ENCODE measurements at regions of chr3 and their contacts with region 1.

Region 1: DNA sequence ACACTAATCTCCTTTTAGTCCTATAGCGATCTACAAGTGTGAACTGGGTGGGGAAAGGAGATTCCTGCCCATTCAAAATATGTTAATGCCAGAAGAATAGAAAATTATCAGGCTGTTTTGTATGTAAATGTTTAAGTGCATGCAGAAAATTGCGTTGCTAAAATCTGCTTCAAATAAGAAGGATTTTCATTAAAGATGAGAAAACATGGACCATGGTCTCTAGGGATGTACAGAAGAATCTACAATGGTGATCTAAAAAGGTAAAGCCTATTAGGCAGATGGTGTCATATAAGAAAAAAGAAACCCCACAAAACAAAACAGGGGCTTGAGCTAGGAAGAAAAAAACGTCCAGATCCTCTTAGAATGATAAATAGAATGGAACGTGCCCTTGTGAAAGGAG is 287.5 kb upstream of the ROBO1 start:
- DNase-seq: no peak
- H3K4me3 ChIP-seq: no peak overlapping the region
- H3K27ac ChIP-seq: no peak overlapping the region
- H3K4me1 ChIP-seq: no peaks in the 10 kb centered on the region
- H3K27me3 ChIP-seq: no peaks in the 10 kb centered on the region
- CTCF ChIP-seq: no peak

Region 2: GRCh38 chr3:79184251-79184650 is 871.1 kb before region 1 on chr3:
- CTCF ChIA-PET with region 1: no interaction called
- dilution Hi-C with region 1: no loop called
- in situ Hi-C with region 1: no loop called
- intact Hi-C with region 1: no loop called
- DNase-seq: no peak
- H3K4me3 ChIP-seq: no peak overlapping the region
- H3K27ac ChIP-seq: no peak overlapping the region
- H3K4me1 ChIP-seq: no peaks in the 10 kb centered on the region
- H3K27me3 ChIP-seq: peaks cover 2% of the 10 kb centered on the region
- CTCF ChIP-seq: no peak

Region 3: DNA sequence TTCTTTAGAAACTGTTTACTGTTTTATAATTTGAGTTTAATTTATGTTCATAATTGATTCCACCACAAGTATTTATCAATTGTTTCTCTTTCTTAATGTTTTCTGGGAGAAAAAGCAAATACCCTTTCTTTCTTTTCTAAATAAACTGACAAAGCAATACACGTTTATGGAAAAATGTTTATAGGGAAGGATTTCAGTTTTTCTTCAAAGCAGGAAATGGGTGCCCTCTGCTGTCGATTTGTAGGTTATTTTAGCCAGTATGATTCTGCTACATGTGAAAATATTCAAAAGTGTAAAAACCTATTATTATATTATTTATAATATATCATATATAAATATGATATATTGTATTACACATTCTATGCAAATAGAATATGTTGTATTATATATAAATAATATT is 633.5 kb after region 1 on chr3:
- CTCF ChIA-PET with region 1: no interaction called
- dilution Hi-C with region 1: no loop called
- in situ Hi-C with region 1: no loop called
- intact Hi-C with region 1: loop called (anchors 5 kb)
- DNase-seq: no peak
- H3K4me3 ChIP-seq: no peak overlapping the region
- H3K27ac ChIP-seq: no peak overlapping the region
- H3K4me1 ChIP-seq: no peaks in the 10 kb centered on the region
- H3K27me3 ChIP-seq: no peaks in the 10 kb centered on the region
- CTCF ChIP-seq: peak in 1 of 2 donors; percentile 42

Measured in mammary epithelial cell (primary cell).